ENCODE measurements at regions of chr1 and their contacts with region 1.

Region 1: GRCh38 chr1:109984456-109985275 is at the start of gene AHCYL1:
- DNase-seq: peak; percentile 99
- H3K4me3 ChIP-seq: peak within 1 kb of the TSS; percentile 85
- H3K27ac ChIP-seq: peak within 1 kb of the TSS; percentile 91
- H3K4me1 ChIP-seq: peaks cover 19% of the 10 kb centered on the region
- H3K27me3 ChIP-seq: no peaks in the 10 kb centered on the region
- CTCF ChIP-seq: peak; percentile 98
- total RNA-seq, gene AHCYL1: 108 to 115 TPM

Region 2: GRCh38 chr1:109548321-109549267 is 436.1 kb before region 1 on chr1 and contains the start of gene GNAI3:
- intact Hi-C with region 1: loop called (anchors 10 kb)
- DNase-seq: peak; percentile 99
- H3K4me3 ChIP-seq: peak within 1 kb of the TSS; percentile 75
- H3K27ac ChIP-seq: peak within 1 kb of the TSS; percentile 93
- H3K4me1 ChIP-seq: peaks cover 7% of the 10 kb centered on the region
- H3K27me3 ChIP-seq: no peaks in the 10 kb centered on the region
- CTCF ChIP-seq: no peak
- total RNA-seq, gene GNAI3: 7.7 to 8.9 TPM

Region 3: DNA sequence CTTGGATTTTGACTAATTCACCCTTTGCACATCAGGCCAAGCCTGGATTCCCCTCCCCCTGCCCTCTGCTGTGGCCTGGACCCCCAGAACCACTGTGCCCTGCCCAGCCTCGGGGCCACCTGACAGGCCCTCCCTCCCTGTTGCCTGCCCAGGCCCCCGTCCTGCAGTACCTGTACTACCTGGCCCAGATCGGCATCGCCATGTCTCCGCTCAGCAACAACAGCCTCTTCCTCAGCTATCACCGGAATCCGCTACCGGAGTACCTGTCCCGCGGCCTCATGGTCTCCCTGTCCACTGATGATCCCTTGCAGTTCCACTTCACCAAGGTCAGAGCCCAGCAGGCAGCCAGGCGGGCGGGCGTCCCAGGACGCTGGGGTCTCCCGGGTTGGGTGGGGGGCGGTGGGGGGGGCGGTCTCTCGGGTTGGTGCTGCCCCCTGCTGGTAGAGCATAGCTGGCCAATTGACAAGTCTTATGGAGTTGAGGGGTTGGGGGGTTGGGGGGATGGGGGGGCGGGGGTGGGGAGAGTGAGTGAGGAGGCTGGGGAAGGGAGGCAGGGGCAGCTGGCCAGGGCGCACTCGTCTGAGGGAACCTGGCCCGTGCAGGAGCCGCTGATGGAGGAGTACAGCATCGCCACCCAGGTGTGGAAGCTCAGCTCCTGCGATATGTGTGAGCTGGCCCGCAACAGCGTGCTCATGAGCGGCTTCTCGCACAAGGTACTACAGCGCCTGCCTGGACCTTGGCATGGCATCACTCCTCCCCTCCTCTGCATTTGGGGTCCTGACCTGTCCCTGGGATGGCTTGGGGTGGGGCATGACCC is 354.4 kb before region 1 on chr1:
- intact Hi-C with region 1: loop called (anchors 10 kb)
- DNase-seq: peak; percentile 21
- H3K4me3 ChIP-seq: no peak overlapping the region
- H3K27ac ChIP-seq: no peak overlapping the region
- H3K4me1 ChIP-seq: peaks cover 11% of the 10 kb centered on the region
- H3K27me3 ChIP-seq: no peaks in the 10 kb centered on the region
- CTCF ChIP-seq: no peak

Region 4: GRCh38 chr1:109718491-109718890 is 266.2 kb before region 1 on chr1:
- intact Hi-C with region 1: loop called (anchors 5 kb)
- DNase-seq: no peak
- H3K4me3 ChIP-seq: no peak overlapping the region
- H3K27ac ChIP-seq: no peak overlapping the region
- H3K4me1 ChIP-seq: no peaks in the 10 kb centered on the region
- H3K27me3 ChIP-seq: no peaks in the 10 kb centered on the region
- CTCF ChIP-seq: peak; percentile 19

Region 5: DNA sequence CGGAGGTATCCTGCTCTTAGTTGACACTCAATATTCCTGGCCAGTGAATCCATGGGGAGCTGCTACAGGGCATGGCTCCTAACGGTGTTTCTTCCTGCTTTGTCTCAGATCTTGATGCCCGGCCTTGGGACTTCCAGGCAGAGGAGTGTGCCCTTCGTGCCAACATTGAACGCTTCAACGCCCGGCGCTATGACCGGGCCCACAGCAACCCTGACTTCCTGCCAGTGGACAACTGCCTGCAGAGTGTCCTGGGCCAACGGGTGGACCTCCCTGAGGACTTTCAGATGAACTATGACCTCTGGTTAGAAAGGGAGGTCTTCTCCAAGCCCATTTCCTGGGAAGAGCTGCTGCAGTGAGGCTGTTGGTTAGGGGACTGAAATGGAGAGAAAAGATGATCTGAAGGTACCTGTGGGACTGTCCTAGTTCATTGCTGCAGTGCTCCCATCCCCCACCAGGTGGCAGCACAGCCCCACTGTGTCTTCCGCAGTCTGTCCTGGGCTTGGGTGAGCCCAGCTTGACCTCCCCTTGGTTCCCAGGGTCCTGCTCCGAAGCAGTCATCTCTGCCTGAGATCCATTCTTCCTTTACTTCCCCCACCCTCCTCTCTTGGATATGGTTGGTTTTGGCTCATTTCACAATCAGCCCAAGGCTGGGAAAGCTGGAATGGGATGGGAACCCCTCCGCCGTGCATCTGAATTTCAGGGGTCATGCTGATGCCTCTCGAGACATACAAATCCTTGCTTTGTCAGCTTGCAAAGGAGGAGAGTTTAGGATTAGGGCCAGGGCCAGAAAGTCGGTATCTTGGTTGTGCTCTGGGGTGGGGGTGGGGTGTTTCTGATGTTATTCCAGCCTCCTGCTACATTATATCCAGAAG is 69.1 kb after region 1 on chr1:
- intact Hi-C with region 1: no loop called
- DNase-seq: peak; percentile 78
- H3K4me3 ChIP-seq: no peak overlapping the region
- H3K27ac ChIP-seq: no peak overlapping the region
- H3K4me1 ChIP-seq: peaks cover 3% of the 10 kb centered on the region
- H3K27me3 ChIP-seq: no peaks in the 10 kb centered on the region
- CTCF ChIP-seq: peak; percentile 89

Measured in colonic mucosa (tissue), 4 donors.